OCI-LY7 (cell line): ENCODE measurements at regions of chr1 and their contacts with region 1.

Region 1: GRCh38 chr1:211469938-211470529 is 21.9 kb downstream of the RD3 start:
- DNase-seq: peak; percentile 48
- H3K4me3 ChIP-seq: no peak overlapping the region
- H3K27ac ChIP-seq: no peak overlapping the region
- H3K4me1 ChIP-seq: no peaks in the 10 kb centered on the region
- CTCF ChIP-seq: peak; percentile 83

Region 2: GRCh38 chr1:211382714-211383480 is 87.1 kb before region 1 on chr1:
- CTCF ChIA-PET with region 1: no interaction called
- POLR2A ChIA-PET with region 1: interaction called, 3 read pairs
- intact Hi-C with region 1: loop called (anchors 5 kb)
- DNase-seq: peak; percentile 83
- H3K4me3 ChIP-seq: peak overlapping the region; percentile 67
- H3K27ac ChIP-seq: no peak overlapping the region
- H3K4me1 ChIP-seq: peaks cover 6% of the 10 kb centered on the region
- CTCF ChIP-seq: no peak

Region 3: GRCh38 chr1:212089560-212090163 is 619.6 kb after region 1 on chr1:
- CTCF ChIA-PET with region 1: no interaction called
- POLR2A ChIA-PET with region 1: no interaction called
- intact Hi-C with region 1: no loop called
- DNase-seq: peak; percentile 4
- H3K4me3 ChIP-seq: no peak overlapping the region
- H3K27ac ChIP-seq: no peak overlapping the region
- H3K4me1 ChIP-seq: no peaks in the 10 kb centered on the region
- CTCF ChIP-seq: no peak